WTC11 (cell line): ENCODE measurements at regions of chr2 and their contacts with region 1.

Region 1: GRCh38 chr2:84832772-84833461 is 48.0 kb downstream of the TRABD2A start:
- DNase-seq: no peak
- ATAC-seq: peak; percentile 29
- H3K4me3 Mint-ChIP-seq: no peak overlapping the region
- H3K27ac Mint-ChIP-seq: no peak overlapping the region
- H3K4me1 Mint-ChIP-seq: peaks cover 22% of the 10 kb centered on the region
- H3K27me3 Mint-ChIP-seq: no peaks in the 10 kb centered on the region
- CTCF ChIP-seq: no peak

Region 2: DNA sequence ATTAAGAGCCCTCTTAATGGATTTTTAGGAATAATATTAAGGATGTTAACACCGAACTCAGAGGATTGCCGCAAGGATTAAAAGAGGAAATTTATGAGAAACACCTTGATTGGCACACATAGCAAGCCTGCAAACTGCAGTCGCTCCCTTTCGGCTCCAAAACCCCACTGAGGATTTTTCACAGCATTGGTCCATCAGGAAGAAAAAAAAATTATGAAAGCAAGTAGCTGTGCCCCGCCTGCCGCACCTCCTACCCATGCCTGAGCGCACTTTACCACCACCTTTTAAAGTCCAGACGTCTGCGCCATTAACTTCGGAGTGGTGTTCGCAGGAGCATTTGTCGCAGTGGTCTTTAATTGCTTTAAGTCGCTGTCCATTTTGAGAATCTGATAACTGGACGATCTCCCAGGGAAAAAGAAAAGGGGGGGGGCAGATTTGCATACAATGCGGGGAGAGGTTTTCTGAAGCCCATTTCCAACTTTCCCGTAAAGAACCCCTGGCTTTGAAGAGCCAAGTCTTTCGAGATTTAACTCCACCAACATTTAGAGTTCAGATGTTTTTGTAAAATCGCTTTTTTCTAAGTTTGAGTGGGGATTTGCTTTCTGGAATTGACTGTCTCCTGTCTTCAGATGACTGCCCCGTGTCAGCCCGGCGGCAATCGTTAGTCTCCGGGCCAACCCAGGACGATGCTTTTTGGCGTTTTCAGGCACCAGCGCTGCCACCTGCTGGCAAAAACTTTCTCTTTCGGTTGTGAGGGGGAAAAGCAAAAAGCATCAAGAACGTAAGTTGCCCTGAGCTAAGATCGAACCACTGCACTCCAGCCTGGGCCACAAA is 48.9 kb after region 1 on chr2:
- CTCF ChIA-PET with region 1: interaction called, 27 read pairs
- POLR2A ChIA-PET with region 1: no interaction called
- DNase-seq: peak; percentile 85
- ATAC-seq: peak; percentile 63
- H3K4me3 Mint-ChIP-seq: peak overlapping the region; percentile 72
- H3K27ac Mint-ChIP-seq: no peak overlapping the region
- H3K4me1 Mint-ChIP-seq: peaks cover 10% of the 10 kb centered on the region
- H3K27me3 Mint-ChIP-seq: peaks cover 88% of the 10 kb centered on the region
- CTCF ChIP-seq: peak; percentile 37; the same call in 1 of the 2 replicates